ENCODE measurements at regions of chr5 and their contacts with region 1.

Region 1: GRCh38 chr5:6820851-6821479 is 107.7 kb downstream of the TENT4A start:
- DNase-seq: peak; percentile 38
- H3K4me3 Mint-ChIP-seq: no peak overlapping the region
- H3K27ac Mint-ChIP-seq: no peak overlapping the region
- H3K4me1 Mint-ChIP-seq: peaks cover 8% of the 10 kb centered on the region
- H3K27me3 Mint-ChIP-seq: peaks cover 26% of the 10 kb centered on the region

Region 2: DNA sequence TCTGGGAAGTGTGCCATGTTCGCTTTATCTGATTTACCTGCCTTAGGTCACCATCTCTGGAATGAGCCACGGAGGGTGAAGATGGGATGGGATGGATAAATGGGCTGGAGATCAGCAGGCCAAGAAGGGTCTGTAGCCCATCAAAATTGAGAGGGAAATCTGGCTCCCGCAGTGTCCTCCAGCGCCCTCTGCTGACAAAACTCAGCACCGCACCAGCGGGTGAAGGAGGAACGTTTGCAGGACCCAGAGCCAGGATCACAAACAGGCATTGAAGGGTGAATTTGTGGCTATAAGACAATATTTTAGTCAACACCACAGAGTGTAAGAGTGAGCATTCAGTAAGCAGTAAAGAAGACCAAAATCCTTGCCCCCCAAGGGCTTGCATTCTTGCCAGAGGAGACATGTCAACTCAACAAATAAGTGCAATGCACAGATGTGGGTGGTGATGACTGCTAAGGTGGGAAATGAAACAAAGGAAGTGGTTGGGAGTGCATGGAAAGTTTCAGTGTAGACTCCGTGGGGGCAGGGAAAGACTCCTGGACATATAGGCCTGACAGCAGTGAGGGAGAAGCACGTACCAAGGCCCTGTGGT is 16.6 kb after region 1 on chr5:
- intact Hi-C with region 1: loop called (anchors 1 kb)
- DNase-seq: no peak
- H3K4me3 Mint-ChIP-seq: no peak overlapping the region
- H3K27ac Mint-ChIP-seq: no peak overlapping the region
- H3K4me1 Mint-ChIP-seq: peaks cover 11% of the 10 kb centered on the region
- H3K27me3 Mint-ChIP-seq: no peaks in the 10 kb centered on the region

Region 3: DNA sequence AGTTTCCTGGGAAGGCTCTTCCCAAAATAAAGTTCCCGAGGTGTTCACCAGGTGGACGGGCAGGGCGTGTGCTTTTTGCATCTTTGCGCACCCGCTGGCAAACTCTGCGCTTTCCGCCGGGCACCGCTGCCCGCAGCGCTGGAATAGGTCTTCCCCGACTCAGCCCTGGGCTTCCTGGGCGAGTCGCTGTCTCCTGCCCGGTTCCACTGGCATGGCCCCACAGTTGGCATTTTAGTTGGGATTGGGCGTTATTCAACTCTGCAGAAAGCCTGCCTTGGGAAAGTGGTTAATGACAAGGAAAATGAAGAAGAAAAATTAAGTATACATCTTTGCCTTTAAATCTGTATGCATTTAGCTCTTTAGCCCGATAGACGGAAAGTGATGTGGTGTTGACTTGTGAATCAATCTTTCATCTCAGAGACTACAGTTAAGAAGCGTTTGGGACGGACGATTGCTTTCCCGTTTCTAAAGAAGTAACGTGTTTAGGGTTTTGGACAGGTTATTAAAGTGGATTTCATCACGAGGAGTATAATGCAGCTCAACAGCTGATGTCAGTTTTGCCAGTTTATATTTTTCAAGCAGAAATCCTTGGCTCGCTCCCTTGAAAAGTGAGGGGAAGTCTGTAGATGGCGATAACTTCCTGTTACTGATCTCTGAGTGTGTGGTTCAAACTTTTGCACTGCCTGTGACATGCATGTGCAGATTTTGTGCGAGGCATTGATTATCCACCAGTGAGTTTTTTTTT is 575.9 kb after region 1 on chr5:
- intact Hi-C with region 1: loop called (anchors 5 kb)
- DNase-seq: no peak
- H3K4me3 Mint-ChIP-seq: no peak overlapping the region
- H3K27ac Mint-ChIP-seq: no peak overlapping the region
- H3K4me1 Mint-ChIP-seq: peaks cover 3% of the 10 kb centered on the region
- H3K27me3 Mint-ChIP-seq: peaks cover 34% of the 10 kb centered on the region

Region 4: DNA sequence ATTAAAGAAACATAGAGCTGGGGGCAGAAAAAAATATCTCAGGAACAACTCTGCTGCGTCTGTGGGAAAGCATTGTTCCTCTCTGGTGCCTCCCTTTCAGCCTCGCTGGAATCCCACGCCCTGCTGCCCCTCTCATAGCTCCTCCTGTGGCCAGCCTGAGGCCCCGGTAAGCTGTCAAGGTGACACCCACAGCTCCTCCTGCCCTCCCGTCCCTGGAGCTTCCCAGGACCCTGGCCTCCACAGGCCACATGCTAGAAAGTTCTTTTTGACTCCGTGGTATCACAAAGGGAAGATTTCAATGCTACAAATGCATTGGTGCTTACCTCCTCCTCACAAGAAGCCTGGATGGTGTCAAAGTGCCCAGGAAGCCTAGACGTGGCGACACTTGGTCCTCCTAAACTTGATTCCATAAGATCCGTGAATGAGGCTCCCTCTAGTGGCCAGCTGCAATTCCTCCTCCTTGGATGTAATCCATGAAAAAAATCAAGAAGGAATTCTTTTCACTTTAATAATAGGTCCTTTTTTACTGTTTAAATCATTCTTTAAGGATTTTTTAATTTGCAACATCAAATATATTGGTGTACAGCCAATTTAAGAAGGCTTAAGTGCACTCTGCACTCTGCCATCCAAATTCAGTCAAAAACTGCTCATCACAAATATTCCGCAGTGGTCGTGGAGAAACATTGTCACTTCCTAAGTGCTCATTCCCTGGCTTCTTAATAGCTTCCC is 925.1 kb after region 1 on chr5:
- intact Hi-C with region 1: loop called (anchors 2 kb)
- DNase-seq: no peak
- H3K4me3 Mint-ChIP-seq: no peak overlapping the region
- H3K27ac Mint-ChIP-seq: no peak overlapping the region
- H3K4me1 Mint-ChIP-seq: no peaks in the 10 kb centered on the region
- H3K27me3 Mint-ChIP-seq: peaks cover 1% of the 10 kb centered on the region